ENCODE measurements at regions of chr11 and their contacts with region 1.

Region 1: DNA sequence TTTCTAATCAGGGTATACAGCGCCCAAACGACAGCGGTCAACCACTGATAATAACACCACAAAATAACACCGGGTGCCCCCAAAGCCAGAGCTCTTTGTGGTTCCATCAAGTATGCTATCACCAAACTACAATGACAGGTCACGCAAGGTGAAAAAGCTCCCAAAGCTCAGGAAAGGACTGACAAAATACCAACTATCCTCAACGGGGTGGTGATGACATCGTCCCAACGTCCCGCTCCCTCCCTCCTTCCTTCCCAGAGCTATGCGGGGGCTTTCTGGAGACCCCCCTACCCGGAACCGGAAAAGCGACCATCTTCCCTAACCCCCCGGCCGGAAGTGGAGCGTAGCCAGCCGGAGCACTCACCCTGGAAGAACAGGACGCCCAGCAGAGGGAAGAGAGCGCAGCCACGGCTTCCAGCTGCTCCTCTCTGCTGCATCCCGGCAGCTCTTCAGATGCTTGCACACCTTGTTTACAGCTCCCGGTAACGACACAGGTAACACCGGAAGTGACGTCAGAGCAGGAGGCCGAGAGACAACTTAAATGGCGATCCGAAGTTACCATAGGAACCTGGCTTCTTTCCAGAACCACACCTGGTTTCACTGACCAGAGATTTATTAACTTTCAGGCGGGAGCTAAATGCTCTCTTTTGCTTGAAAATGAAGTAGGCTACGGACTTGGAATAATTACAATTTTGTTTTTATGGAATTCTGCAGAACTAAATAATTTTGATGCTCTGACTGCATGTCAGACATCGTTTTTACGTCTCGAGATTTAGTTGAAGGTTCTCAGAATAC is at the start of gene MPZL3:
- DNase-seq: peak; percentile 93
- H3K4me3 Mint-ChIP-seq: peak within 1 kb of the TSS; percentile 98
- H3K27ac Mint-ChIP-seq: peak within 1 kb of the TSS; percentile 99
- H3K4me1 Mint-ChIP-seq: peaks cover 39% of the 10 kb centered on the region
- H3K27me3 Mint-ChIP-seq: no peaks in the 10 kb centered on the region
- total RNA-seq, gene MPZL3: 29.3 to 30.5 TPM

Region 2: GRCh38 chr11:118240999-118241768 is 10.9 kb before region 1 on chr11:
- CTCF ChIA-PET with region 1: interaction called, 6 read pairs
- intact Hi-C with region 1: loop called (anchors 1 kb)
- DNase-seq: peak; percentile 87
- H3K4me3 Mint-ChIP-seq: peak overlapping the region; percentile 77
- H3K27ac Mint-ChIP-seq: peak overlapping the region; percentile 99
- H3K4me1 Mint-ChIP-seq: peaks cover 91% of the 10 kb centered on the region
- H3K27me3 Mint-ChIP-seq: no peaks in the 10 kb centered on the region

Region 3: DNA sequence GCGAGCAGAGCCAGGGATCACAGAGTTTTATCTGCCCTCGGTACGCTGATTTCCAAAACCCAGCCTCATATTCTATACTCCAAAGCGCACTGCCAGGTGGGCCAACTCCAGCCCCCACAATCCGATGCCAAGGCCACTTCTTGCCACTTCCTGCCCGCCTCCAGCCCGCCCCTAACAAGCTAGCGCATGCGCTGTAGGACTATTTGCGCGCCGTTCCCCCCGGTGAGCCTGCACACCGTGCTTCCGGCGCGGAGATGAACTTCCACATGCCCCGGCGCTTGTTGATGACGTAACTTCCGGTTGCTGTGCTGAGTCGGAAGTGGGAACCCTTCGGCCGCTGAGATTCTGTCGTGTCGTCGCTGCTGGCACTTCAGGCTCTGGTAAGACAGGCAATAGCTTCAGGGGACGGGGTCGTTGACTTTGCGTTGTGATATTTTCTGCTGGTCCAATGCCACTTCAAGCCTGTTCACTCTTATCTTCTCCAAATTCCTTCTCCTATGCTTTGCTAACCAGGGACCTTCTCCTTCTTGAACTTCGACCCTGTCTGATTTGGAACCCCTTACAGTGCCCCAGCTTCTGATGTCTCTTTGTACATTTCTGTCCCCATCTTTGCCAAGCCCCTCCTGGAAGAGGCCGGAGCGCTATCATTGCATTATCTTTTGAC is 107.4 kb after region 1 on chr11 and contains the start of gene UBE4A:
- CTCF ChIA-PET with region 1: no interaction called
- intact Hi-C with region 1: loop called (anchors 10 kb)
- DNase-seq: peak; percentile 100
- H3K4me3 Mint-ChIP-seq: peak within 1 kb of the TSS; percentile 99
- H3K27ac Mint-ChIP-seq: peak within 1 kb of the TSS; percentile 91
- H3K4me1 Mint-ChIP-seq: peaks cover 52% of the 10 kb centered on the region
- H3K27me3 Mint-ChIP-seq: no peaks in the 10 kb centered on the region
- total RNA-seq, gene UBE4A: 35.3 to 35.7 TPM